GM18951 (cell line): ENCODE measurements at regions of chr9 and their contacts with region 1.

Region 1: GRCh38 chr9:7320139-7320538 is 479.4 kb downstream of the DMAC1 start:
- POLR2A ChIP-seq: no peak

Region 2: DNA sequence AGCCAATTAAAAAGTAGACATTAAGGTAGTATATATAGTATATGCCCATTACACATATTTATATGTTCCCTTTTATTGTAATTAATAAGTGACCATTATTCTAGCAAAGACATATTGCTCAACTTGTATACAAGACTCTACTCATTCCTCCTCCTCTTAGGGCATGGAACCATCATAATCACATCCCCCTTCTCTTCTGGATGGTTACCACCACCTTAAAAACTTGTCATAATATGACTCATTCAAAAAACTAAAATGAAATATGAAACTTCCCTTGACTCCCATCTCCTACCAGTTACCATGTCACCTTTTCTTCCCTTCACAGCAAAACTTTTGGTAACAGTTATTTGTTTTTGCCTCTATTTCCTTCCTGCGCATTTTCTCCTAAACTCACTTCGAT is 123.7 kb before region 1 on chr9:
- in situ Hi-C with region 1: loop called (anchors 10 kb)
- POLR2A ChIP-seq: no peak

Region 3: GRCh38 chr9:7640231-7640630 is 320.1 kb after region 1 on chr9:
- in situ Hi-C with region 1: no loop called
- POLR2A ChIP-seq: no peak